ENCODE measurements at regions of chr17 and their contacts with region 1.

Region 1: DNA sequence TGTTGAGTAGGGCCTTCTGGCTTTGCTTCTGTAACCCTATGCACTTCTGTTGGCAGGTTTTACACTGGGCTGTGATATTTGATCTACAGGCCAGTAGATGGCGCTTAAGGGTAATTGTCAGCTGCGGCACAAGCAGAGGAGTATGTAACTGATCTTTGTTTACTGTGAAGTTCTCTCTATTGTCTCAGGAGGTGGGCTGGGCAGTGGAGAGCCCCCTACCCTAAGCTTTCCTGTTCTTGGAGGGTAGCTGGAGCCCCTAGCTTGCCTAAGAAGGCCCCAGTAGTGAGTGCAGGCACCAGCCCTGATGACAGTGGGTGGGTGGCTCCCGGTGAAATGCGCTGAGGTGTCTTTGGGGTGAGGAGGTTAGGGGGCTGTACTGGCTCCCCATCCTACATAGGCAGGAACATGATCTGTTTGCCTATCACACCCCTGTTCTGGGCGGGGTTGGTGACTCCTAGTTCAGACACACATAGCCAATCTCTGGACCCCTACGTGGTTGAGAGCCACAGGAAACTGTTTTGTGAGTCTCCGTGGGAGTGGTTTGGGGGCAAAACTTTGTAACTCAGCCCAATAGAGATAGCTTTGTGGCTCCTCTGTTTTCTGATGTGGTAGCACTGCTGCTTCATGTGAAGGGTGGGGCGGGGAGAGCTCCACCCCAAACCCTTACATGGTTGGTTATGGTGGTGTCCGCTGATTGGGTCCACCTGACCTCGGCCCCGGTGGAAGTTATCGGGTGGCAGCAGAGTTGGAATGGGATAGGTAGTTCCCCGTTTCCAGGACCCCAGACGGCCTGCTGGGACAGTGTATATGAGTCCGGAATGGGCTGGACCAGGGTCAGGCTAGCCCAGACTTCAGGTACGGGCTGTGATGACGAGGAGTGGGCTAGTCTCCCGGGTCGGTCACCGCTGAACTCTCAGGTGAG is 60.4 kb downstream of the SLFN11 start:
- DNase-seq: peak; percentile 56 to 96 (median 90)
- ATAC-seq: peak; percentile 93
- H3K4me3 ChIP-seq: peak overlapping the region; percentile 70
- H3K4me3 Mint-ChIP-seq: peak overlapping the region; percentile 88 to 98 (median 96)
- H3K27ac ChIP-seq: peak overlapping the region; percentile 73
- H3K27ac Mint-ChIP-seq: peak overlapping the region; percentile 94 to 99 (median 98)
- H3K4me1 ChIP-seq: peaks cover 12 to 13% of the 10 kb centered on the region in 2 donors
- H3K4me1 Mint-ChIP-seq: peaks cover 37 to 79% (median 69%) of the 10 kb centered on the region in 7 donors
- H3K27me3 ChIP-seq: no peaks in the 10 kb centered on the region
- H3K27me3 Mint-ChIP-seq: peaks cover 0 to 5% (median 0%) of the 10 kb centered on the region in 5 donors

Region 2: DNA sequence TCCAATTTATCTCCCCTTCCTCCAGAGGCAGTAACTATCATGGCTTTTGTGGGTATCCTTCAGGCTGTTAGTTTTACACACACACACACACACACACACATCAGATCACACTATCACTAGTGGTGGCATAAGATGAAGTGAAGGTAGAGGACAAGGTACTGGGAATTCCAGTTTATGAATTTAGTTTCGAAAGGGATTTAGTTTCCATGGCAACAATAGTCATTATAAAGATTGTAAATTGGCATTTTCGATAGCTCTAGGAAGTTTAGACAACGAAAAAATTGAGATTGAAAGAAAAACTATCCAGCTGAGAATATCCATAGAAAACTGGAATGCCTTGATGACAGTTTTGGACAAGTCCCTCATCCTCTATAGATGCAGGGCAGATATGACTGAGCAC is 39.4 kb before region 1 on chr17:
- CTCF ChIA-PET with region 1: interaction called, 10 read pairs
- POLR2A ChIA-PET with region 1: interaction called, 8 read pairs
- intact Hi-C with region 1: loop called in 1 of 2 experiments (anchors 2 kb)
- DNase-seq: no peak
- ATAC-seq: no peak
- H3K4me3 ChIP-seq: no peak overlapping the region
- H3K4me3 Mint-ChIP-seq: peak overlapping the region in 2 of 10 donors; percentile 22 to 60
- H3K27ac ChIP-seq: peak overlapping the region; percentile 3
- H3K27ac Mint-ChIP-seq: peak overlapping the region in 7 of 9 donors; percentile 10 to 91 (median 86)
- H3K4me1 ChIP-seq: peaks cover 0 to 15% of the 10 kb centered on the region in 2 donors
- H3K4me1 Mint-ChIP-seq: peaks cover 19 to 80% (median 66%) of the 10 kb centered on the region in 7 donors
- H3K27me3 ChIP-seq: no peaks in the 10 kb centered on the region
- H3K27me3 Mint-ChIP-seq: peaks cover 0 to 16% (median 0%) of the 10 kb centered on the region in 5 donors

Region 3: DNA sequence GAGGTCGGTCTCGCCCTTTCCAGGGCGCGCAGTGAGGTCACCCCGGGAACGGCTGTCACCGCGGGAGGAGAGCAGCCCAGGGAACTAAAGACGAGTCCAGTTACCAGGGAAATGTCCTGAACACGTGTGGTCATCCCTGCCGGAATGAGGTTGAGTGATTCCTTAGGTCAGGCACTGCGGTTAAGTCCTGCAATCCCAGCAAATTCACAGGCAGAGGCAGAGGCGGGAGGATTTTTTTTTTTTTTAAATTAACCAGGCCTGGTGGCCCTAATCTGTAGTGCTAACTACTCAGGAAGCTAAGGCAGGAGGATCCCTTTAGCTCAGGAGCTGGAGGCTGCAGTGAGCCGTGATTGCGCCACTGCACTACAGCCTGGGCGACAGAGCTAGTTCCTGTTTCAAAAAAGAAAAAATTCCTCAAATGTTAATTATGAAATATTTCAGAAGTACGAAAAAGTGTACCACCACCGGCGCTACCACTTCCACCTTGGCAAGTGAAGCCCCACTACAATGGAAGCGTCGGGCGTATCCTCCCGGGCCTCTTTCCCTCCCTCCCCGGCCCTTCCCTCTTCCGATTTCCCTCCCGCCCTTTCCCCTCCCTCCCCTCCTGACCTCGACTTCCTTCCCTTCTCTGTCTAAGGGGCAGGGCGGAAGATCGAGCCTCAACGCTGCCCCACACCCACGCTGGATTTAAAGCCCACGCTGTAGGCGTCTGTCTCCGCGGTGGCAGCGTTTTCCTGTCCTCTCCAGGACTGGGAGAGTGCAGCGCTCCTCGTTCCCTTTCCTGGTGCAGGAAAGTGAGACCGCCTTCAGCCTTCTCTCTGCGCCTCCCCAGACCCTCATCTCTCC is 33.1 kb after region 1 on chr17:
- CTCF ChIA-PET with region 1: interaction called, 3 read pairs
- POLR2A ChIA-PET with region 1: interaction called, 9 read pairs
- intact Hi-C with region 1: loop called (anchors 1 to 2 kb)
- DNase-seq: peak in 7 of 9 donors; percentile 17 to 38 (median 23)
- ATAC-seq: peak; percentile 77
- H3K4me3 ChIP-seq: peak overlapping the region; percentile 65
- H3K4me3 Mint-ChIP-seq: peak overlapping the region; percentile 91 to 98 (median 93)
- H3K27ac ChIP-seq: peak overlapping the region; percentile 34
- H3K27ac Mint-ChIP-seq: peak overlapping the region; percentile 47 to 89 (median 82)
- H3K4me1 ChIP-seq: peaks cover 13 to 29% of the 10 kb centered on the region in 2 donors
- H3K4me1 Mint-ChIP-seq: peaks cover 33 to 58% (median 40%) of the 10 kb centered on the region in 7 donors
- H3K27me3 ChIP-seq: no peaks in the 10 kb centered on the region
- H3K27me3 Mint-ChIP-seq: peaks cover 0 to 33% (median 0%) of the 10 kb centered on the region in 5 donors

Region 4: DNA sequence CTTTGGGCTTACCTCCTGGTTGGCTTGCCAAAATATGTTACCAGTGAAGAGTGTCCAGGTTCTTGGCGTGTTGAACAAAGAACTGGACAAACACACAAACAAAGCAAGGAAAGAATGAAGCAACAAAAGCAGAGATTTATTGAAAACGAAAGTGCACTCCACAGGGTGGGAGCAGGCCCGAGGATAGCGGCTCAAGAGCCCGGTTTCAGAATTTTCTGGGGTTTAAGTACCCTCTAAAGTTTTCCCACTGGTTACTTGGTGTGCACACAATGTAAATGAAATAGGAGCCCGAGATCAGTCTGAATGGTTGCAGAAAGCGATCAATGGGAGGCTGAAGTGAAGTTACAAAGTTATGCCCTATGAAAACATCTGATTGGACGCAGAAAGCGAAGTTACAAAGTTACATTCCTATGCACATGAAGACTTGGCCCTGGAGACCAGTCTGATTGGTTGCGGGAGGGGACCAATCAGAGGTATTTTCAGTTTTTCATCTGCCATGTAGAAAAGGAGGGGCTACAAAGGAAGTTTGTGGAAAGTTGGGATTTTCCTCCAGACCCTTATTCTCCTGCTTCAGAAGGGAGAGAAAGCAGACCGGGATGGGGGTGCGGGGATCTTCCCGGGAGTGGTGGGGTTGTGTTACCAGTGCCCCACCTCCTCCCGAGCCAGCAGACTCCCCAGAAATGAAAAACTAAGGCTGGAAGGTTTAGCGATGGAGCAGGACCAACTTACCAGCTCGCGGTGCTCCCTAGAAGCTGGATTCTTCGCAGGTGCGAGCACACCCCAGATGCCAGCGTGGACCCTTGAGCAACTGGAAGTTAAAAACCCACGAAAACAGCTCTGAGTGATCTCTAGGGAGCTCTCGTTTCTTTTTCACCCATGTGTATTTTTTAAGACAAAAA is 119.4 kb after region 1 on chr17 and contains the start of gene SLFN12:
- CTCF ChIA-PET with region 1: no interaction called
- POLR2A ChIA-PET with region 1: interaction called, 4 read pairs
- intact Hi-C with region 1: loop called in 1 of 2 experiments (anchors 1 kb)
- DNase-seq: peak in 8 of 9 donors; percentile 31 to 75 (median 70)
- ATAC-seq: peak; percentile 95
- H3K4me3 ChIP-seq: peak within 1 kb of the TSS; percentile 70
- H3K4me3 Mint-ChIP-seq: peak within 1 kb of the TSS; percentile 86 to 100 (median 96)
- H3K27ac ChIP-seq: peak within 1 kb of the TSS; percentile 63
- H3K27ac Mint-ChIP-seq: peak within 1 kb of the TSS; percentile 82 to 94 (median 91)
- H3K4me1 ChIP-seq: peaks cover 16 to 28% of the 10 kb centered on the region in 2 donors
- H3K4me1 Mint-ChIP-seq: peaks cover 36 to 65% (median 59%) of the 10 kb centered on the region in 7 donors
- H3K27me3 ChIP-seq: no peaks in the 10 kb centered on the region
- H3K27me3 Mint-ChIP-seq: no peaks in the 10 kb centered on the region
- total RNA-seq, gene SLFN12: 4.2 to 14.9 (median 6.5) TPM

Region 5: DNA sequence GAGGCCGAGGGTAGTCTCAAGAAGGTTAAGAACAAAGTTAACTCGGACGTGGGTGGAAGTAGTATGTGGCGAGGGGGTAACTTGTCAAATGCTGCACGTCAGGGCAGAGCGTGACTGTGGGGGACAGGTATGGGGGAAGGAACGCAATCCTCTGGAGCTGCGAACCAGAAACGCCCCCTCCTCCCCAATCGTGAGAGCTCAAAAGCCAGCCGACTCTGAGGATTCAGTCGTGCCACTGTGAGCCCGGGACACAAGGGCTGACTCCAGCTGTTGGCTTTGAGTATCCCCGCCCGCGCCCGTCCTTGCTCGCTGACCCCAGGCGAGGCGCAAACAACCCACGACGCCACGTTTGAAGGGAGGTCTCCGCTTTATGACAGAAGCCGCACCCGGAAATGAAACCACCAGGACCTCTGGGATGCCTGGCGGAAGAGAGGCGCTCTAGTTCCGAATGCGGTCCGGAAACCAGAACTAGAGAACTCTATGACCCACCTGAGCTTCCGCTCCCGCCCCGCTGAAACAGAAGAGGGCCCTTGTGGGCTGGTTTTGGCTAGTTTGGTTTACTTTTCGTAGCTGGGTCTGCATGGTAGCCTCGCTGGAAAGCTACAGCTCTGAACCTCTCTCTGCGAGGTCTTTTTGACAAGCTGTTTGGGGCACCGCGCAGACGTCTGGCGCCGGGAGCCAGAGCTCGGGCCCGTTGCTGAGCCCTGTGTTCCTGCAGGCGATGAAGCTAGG is 265.3 kb after region 1 on chr17 and contains the start of gene PEX12:
- CTCF ChIA-PET with region 1: interaction called, 5 read pairs
- POLR2A ChIA-PET with region 1: interaction called, 16 read pairs
- intact Hi-C with region 1: loop called in 1 of 2 experiments (anchors 5 kb)
- DNase-seq: peak; percentile 62 to 94 (median 89)
- ATAC-seq: peak; percentile 99
- H3K4me3 ChIP-seq: peak within 1 kb of the TSS; percentile 86
- H3K4me3 Mint-ChIP-seq: peak within 1 kb of the TSS; percentile 92 to 100 (median 97)
- H3K27ac ChIP-seq: peak within 1 kb of the TSS; percentile 92
- H3K27ac Mint-ChIP-seq: peak within 1 kb of the TSS; percentile 96 to 100 (median 99)
- H3K4me1 ChIP-seq: peaks cover 5 to 12% of the 10 kb centered on the region in 2 donors
- H3K4me1 Mint-ChIP-seq: peaks cover 6 to 40% (median 32%) of the 10 kb centered on the region in 7 donors
- H3K27me3 ChIP-seq: no peaks in the 10 kb centered on the region
- H3K27me3 Mint-ChIP-seq: peaks cover 0 to 2% (median 0%) of the 10 kb centered on the region in 5 donors
- total RNA-seq, gene PEX12: 2.9 to 8.0 (median 5.3) TPM

Region 6: GRCh38 chr17:35660902-35661301 is 347.9 kb after region 1 on chr17:
- CTCF ChIA-PET with region 1: no interaction called
- POLR2A ChIA-PET with region 1: no interaction called
- intact Hi-C with region 1: no loop called
- DNase-seq: no peak
- ATAC-seq: no peak
- H3K4me3 ChIP-seq: no peak overlapping the region
- H3K4me3 Mint-ChIP-seq: no peak overlapping the region
- H3K27ac ChIP-seq: no peak overlapping the region
- H3K27ac Mint-ChIP-seq: peak overlapping the region in 2 of 9 donors; percentile 18 to 54
- H3K4me1 ChIP-seq: no peaks in the 10 kb centered on the region
- H3K4me1 Mint-ChIP-seq: peaks cover 0 to 9% (median 3%) of the 10 kb centered on the region in 7 donors
- H3K27me3 ChIP-seq: no peaks in the 10 kb centered on the region
- H3K27me3 Mint-ChIP-seq: no peaks in the 10 kb centered on the region

Region 7: DNA sequence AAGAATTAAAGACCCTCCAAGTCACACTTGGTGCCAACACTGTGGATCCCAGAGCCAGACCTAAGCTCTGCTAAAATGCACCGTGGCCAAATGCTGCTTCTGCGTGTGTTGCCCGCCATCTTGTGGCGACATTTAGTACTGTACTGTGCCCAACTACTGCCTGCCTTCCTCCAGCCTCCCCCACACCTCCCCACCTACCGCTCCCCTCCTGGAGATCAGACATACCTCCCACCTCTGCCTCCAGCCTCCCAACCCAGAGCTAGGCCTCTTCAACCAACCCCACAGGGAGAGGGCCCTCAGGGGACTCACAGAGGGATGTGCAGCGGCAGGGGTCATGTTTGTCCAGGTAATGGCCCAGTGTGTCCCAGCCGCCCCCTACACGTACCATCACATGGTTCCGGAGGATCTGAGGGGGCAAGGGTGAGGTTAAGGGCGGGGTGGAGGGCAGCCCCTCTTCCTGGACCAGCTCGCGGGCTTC is 434.5 kb after region 1 on chr17:
- CTCF ChIA-PET with region 1: no interaction called
- POLR2A ChIA-PET with region 1: no interaction called
- intact Hi-C with region 1: loop called (anchors 1 to 2 kb)
- DNase-seq: peak; percentile 61 to 83 (median 75)
- ATAC-seq: peak; percentile 93
- H3K4me3 ChIP-seq: no peak overlapping the region
- H3K4me3 Mint-ChIP-seq: no peak overlapping the region
- H3K27ac ChIP-seq: no peak overlapping the region
- H3K27ac Mint-ChIP-seq: no peak overlapping the region
- H3K4me1 ChIP-seq: no peaks in the 10 kb centered on the region
- H3K4me1 Mint-ChIP-seq: peaks cover 0 to 21% (median 3%) of the 10 kb centered on the region in 7 donors
- H3K27me3 ChIP-seq: peaks cover 0 to 10% of the 10 kb centered on the region in 2 donors
- H3K27me3 Mint-ChIP-seq: peaks cover 35 to 50% (median 42%) of the 10 kb centered on the region in 5 donors